Activated naive CD4-positive, alpha-beta T cell treated with anti-CD3 and anti-CD28 coated beads for 36 hours (primary cell): ENCODE measurements at regions of chr13 and their contacts with region 1.

Region 1: GRCh38 chr13:30617315-30618185 is at the start of gene USPL1:
- DNase-seq: peak; percentile 98
- H3K4me3 Mint-ChIP-seq: no peak within 1 kb of the TSS
- H3K27ac Mint-ChIP-seq: no peak within 1 kb of the TSS
- H3K4me1 Mint-ChIP-seq: peaks cover 29% of the 10 kb centered on the region
- H3K27me3 Mint-ChIP-seq: no peaks in the 10 kb centered on the region
- total RNA-seq, gene USPL1: 10.7 to 11.3 TPM

Region 2: DNA sequence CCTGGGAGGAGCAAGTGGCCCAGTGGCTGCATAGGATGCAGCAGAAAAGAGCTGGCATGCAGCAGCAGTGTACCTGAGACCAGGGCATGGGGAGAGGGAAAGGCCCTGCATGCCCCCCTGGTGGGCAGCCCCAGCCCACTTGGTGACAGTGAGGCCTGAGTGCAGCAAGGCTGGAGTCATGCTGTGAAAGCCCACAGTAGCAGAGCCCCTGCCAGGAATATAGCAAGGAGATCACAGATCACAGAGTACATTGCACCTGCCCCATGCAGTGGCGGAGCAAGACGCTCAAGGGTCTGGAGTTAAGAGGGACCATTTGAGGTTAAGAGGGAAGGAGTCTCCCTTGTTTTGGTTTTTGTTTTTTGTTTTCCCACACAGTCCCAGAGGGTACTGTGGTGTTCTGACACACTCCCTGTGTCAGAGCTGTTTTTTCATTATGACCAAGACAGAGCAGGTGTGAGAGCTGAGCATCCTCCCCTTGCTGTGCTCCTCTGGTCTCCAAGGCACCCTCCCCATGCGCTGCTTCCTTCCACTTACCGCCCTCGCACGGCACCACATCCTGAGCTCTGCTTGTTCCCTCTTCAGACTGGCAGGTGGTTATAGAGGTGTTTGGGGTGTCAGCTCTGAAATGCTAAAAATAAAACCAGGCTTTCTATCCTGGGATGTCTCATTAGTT is 682.1 kb before region 1 on chr13:
- CTCF ChIA-PET with region 1: no interaction called
- intact Hi-C with region 1: loop called (anchors 1 kb)
- DNase-seq: peak; percentile 94
- H3K4me3 Mint-ChIP-seq: peak overlapping the region; percentile 67
- H3K27ac Mint-ChIP-seq: peak overlapping the region; percentile 83
- H3K4me1 Mint-ChIP-seq: peaks cover 39% of the 10 kb centered on the region
- H3K27me3 Mint-ChIP-seq: no peaks in the 10 kb centered on the region

Region 3: DNA sequence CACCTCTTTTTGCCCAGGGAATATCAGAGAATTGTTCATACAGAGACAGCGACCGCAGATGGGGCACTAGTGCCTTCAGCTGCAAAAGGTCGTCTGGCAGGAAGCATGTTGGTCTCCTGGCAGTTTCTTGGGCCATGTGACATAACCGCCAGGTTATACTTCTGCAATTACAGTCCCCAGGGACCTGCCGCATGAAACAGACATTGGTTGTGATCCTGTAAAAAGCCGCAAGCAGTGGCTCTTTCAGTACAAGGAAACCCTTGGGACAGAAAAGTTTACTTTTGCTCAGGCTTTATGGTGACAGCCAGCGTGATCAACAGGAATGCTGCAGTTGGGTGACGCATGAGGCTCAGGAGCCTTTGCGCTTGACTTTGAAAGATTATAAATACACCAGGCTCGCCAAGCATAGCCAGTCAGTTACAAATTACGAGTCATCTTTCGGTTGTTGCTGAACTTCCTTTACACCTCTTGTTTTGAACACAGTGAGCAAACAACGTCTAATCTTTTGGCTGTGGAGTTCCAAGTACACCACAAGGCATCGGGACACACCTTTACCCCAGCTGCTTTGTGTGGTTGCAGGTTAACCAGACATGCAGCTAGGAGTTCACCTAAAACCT is 245.8 kb before region 1 on chr13:
- CTCF ChIA-PET with region 1: no interaction called
- intact Hi-C with region 1: loop called (anchors 1 kb)
- DNase-seq: peak; percentile 87
- H3K4me3 Mint-ChIP-seq: peak overlapping the region; percentile 58
- H3K27ac Mint-ChIP-seq: peak overlapping the region; percentile 87
- H3K4me1 Mint-ChIP-seq: peaks cover 75% of the 10 kb centered on the region
- H3K27me3 Mint-ChIP-seq: no peaks in the 10 kb centered on the region

Region 4: GRCh38 chr13:30408319-30409101 is 209.0 kb before region 1 on chr13:
- CTCF ChIA-PET with region 1: interaction called, 3 read pairs
- intact Hi-C with region 1: loop called (anchors 1 kb)
- DNase-seq: peak; percentile 96
- H3K4me3 Mint-ChIP-seq: peak overlapping the region; percentile 49
- H3K27ac Mint-ChIP-seq: no peak overlapping the region
- H3K4me1 Mint-ChIP-seq: peaks cover 10% of the 10 kb centered on the region
- H3K27me3 Mint-ChIP-seq: no peaks in the 10 kb centered on the region

Region 5: DNA sequence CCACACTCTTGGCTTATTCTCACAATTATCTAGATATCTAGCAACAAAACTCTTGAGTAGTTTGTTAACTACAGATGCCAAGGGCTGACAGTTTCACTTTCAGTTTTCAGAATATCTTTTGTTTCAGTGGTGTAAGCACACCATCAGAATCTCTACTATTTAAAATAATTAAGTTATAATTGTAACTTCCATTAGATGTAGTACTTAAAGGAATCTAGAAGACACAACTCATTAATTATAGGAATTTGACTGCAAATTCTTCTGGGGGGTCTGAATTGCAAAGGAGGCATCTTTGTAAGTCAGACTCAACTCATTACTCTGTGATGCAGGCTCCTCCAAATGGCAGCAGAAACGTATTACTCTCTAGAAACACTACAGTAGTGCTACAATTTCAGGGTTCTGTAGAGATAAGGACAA is 44.7 kb before region 1 on chr13:
- CTCF ChIA-PET with region 1: no interaction called
- intact Hi-C with region 1: loop called (anchors 2 kb)
- DNase-seq: peak; percentile 29
- H3K4me3 Mint-ChIP-seq: peak overlapping the region; percentile 41
- H3K27ac Mint-ChIP-seq: peak overlapping the region; percentile 12
- H3K4me1 Mint-ChIP-seq: peaks cover 33% of the 10 kb centered on the region
- H3K27me3 Mint-ChIP-seq: no peaks in the 10 kb centered on the region

Region 6: GRCh38 chr13:30802953-30803478 is 185.5 kb after region 1 on chr13:
- CTCF ChIA-PET with region 1: no interaction called
- intact Hi-C with region 1: loop called (anchors 2 kb)
- DNase-seq: peak; percentile 88
- H3K4me3 Mint-ChIP-seq: peak overlapping the region; percentile 38
- H3K27ac Mint-ChIP-seq: no peak overlapping the region
- H3K4me1 Mint-ChIP-seq: peaks cover 5% of the 10 kb centered on the region
- H3K27me3 Mint-ChIP-seq: no peaks in the 10 kb centered on the region

Region 7: DNA sequence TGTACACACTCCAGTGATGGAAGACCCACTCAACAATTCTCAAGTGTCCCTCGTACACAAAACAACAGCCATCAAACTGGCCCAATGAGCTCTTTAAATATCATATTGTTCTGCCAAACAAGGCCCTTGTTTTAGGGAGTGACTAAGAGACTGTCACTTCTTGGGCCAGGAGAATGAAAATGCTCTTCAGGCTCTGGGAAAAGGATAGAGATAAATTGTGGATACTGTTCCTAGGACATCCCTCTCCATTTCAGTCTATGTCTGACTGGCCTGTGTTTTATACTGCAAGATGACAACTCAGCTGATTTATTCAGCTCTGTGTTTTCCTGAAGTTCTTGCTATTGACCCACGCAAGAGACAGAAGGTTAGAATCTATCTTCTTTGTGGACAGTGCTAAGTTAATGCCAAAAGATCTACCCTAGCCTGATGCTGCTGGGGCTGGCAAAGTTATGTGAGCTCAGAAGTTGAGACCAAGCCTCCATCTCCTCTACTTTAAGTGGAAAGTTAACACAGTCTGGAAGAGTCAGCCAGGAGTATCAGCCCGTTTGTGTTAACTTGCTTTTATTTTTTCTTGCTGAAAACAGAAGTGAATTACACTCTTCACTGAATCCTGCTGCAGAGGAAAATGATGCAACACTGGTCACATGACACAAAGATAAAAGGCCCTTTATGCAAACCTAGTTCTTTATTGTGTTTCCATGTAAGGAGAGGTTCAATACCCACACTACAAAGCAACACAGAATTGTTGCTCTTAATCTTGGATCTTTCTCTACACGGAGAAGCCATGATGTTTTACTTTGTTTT is 1428.6 kb after region 1 on chr13:
- CTCF ChIA-PET with region 1: no interaction called
- intact Hi-C with region 1: loop called (anchors 2 kb)
- DNase-seq: peak; percentile 61
- H3K4me3 Mint-ChIP-seq: peak overlapping the region; percentile 55
- H3K27ac Mint-ChIP-seq: peak overlapping the region; percentile 93
- H3K4me1 Mint-ChIP-seq: peaks cover 69% of the 10 kb centered on the region
- H3K27me3 Mint-ChIP-seq: no peaks in the 10 kb centered on the region